ENCODE measurements at regions of chr17 and their contacts with region 1.

Region 1: GRCh38 chr17:29148790-29149430 is 31.3 kb downstream of the MYO18A start:
- DNase-seq: peak; percentile 89
- ATAC-seq: peak; percentile 83
- H3K4me3 ChIP-seq: peak overlapping the region; percentile 65
- H3K27ac ChIP-seq: 0 out of 2 replicates have a peak overlapping the region, but pooled peaks have one; percentile 5
- H3K4me1 ChIP-seq: peaks cover 43% of the 10 kb centered on the region
- H3K27me3 ChIP-seq: no peaks in the 10 kb centered on the region
- CTCF ChIP-seq: peak; percentile 72

Region 2: DNA sequence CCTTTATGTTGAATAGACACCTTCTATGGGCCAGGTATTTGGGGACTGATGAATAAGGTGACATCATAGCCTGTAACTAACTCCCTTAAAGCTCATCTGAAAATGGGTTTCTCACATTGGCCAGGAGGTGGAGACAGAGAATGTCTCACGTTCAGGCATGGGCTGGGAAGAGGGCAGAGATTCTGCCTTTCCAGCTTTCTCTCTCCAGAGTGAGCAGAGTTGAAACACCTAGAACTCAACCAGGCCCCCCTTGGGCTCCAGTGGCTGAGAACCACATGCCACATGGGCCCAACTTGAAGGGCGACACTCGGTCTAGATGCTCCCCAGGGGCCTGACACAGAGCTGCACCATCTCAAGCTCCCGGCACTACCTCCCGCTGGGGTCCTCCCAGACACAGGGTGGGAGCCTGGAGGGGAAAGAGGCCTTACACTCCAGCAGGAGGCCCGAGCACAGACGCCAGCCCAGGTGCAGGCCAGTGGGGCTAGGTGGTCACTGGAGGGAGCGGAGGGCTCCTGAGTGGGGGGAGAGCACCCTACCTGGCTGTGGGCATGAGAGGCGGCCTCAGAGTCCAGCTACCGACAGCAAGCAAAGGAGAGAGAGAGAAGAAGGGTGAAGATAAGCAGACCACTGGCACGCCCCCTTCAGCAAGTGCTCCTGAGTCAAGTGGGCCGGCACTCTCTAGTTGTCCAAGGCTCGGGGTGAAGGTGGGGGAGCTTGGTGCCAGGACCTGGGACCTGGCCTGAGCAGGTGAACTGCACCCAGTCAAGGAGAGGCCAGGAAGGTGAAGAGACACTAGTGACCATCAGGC is 24.6 kb before region 1 on chr17:
- CTCF ChIA-PET with region 1: interaction called, 23 read pairs
- POLR2A ChIA-PET with region 1: no interaction called
- intact Hi-C with region 1: loop called (anchors 1 kb)
- DNase-seq: peak; percentile 72
- ATAC-seq: peak; percentile 92
- H3K4me3 ChIP-seq: no peak overlapping the region
- H3K27ac ChIP-seq: no peak overlapping the region
- H3K4me1 ChIP-seq: peaks cover 14% of the 10 kb centered on the region
- H3K27me3 ChIP-seq: no peaks in the 10 kb centered on the region
- CTCF ChIP-seq: peak; percentile 67

Region 3: DNA sequence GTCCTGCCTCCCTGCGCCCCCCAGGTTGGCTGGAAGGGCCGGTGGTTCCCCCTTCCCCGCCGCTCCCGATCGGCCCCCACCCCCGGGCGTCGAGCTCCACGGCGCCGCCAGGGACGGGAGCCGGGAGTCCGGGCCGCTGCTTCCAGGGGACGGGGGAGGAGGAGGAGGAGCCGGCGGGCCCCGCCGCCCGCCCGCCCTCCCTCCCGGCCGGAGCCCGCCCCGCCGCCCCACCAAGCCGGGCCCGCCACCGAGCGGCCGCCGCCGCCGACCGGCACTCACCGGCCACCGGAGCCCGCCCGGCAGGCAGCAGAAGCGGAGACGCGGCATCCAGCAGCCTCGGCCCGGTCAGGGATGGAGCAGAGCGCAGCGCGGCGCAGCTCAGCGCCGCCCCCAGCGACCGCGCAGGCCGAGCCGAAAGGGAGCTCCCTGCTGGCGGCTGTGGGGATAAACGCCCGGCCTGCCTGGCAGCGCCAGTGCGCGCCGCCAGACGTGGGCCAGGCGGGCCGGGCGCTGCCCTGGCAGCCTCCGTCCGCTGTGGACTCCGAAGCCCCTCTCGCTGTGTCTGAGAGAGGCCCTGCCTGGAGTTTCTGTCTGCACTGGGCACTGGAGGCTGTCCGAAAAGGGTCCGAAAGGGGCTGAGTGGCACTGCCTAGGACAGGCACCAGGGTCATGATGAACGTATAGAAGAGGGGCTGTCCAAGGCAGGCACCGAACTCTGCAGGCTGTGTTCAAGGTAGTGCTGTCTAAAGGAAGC is 31.3 kb after region 1 on chr17 and contains the start of gene MYO18A:
- CTCF ChIA-PET with region 1: interaction called, 34 read pairs
- POLR2A ChIA-PET with region 1: interaction called, 22 read pairs
- intact Hi-C with region 1: loop called (anchors 1 kb)
- DNase-seq: peak; percentile 76
- ATAC-seq: peak; percentile 74
- H3K4me3 ChIP-seq: peak within 1 kb of the TSS; percentile 72
- H3K27ac ChIP-seq: peak within 1 kb of the TSS; percentile 81
- H3K4me1 ChIP-seq: peaks cover 44% of the 10 kb centered on the region
- H3K27me3 ChIP-seq: no peaks in the 10 kb centered on the region
- CTCF ChIP-seq: peak; percentile 60
- total RNA-seq, gene MYO18A: 28.0 and 36.1 TPM in 2 replicates

Region 4: GRCh38 chr17:29205047-29205446 is 56.1 kb after region 1 on chr17:
- CTCF ChIA-PET with region 1: no interaction called
- POLR2A ChIA-PET with region 1: no interaction called
- intact Hi-C with region 1: no loop called
- DNase-seq: no peak
- ATAC-seq: no peak
- H3K4me3 ChIP-seq: no peak overlapping the region
- H3K27ac ChIP-seq: no peak overlapping the region
- H3K4me1 ChIP-seq: no peaks in the 10 kb centered on the region
- H3K27me3 ChIP-seq: no peaks in the 10 kb centered on the region
- CTCF ChIP-seq: no peak

Region 5: GRCh38 chr17:29219378-29220047 is 70.6 kb after region 1 on chr17:
- CTCF ChIA-PET with region 1: interaction called, 7 read pairs
- POLR2A ChIA-PET with region 1: no interaction called
- intact Hi-C with region 1: loop called (anchors 1 kb)
- DNase-seq: peak; percentile 82
- ATAC-seq: peak; percentile 99
- H3K4me3 ChIP-seq: no peak overlapping the region; the same call in 1 of the 2 replicates
- H3K27ac ChIP-seq: no peak overlapping the region
- H3K4me1 ChIP-seq: no peaks in the 10 kb centered on the region
- H3K27me3 ChIP-seq: no peaks in the 10 kb centered on the region
- CTCF ChIP-seq: peak; percentile 92

Region 6: GRCh38 chr17:29293890-29294579 is 145.1 kb after region 1 on chr17 and contains the start of gene NUFIP2:
- CTCF ChIA-PET with region 1: interaction called, 5 read pairs
- POLR2A ChIA-PET with region 1: no interaction called
- intact Hi-C with region 1: loop called (anchors 5 kb)
- DNase-seq: peak; percentile 96
- ATAC-seq: peak; percentile 95
- H3K4me3 ChIP-seq: peak within 1 kb of the TSS; percentile 100
- H3K27ac ChIP-seq: peak within 1 kb of the TSS; percentile 75
- H3K4me1 ChIP-seq: peaks cover 19% of the 10 kb centered on the region
- H3K27me3 ChIP-seq: no peaks in the 10 kb centered on the region
- CTCF ChIP-seq: no peak
- total RNA-seq, gene NUFIP2: 16.1 and 22.6 TPM in 2 replicates

Measured in PC-3 (cell line).